ENCODE measurements at regions of chr10 and their contacts with region 1.

Region 1: GRCh38 chr10:101067356-101068083 is 5.7 kb downstream of the KAZALD1 start:
- DNase-seq: peak; percentile 76 to 85
- ATAC-seq: peak; percentile 81
- H3K4me3 ChIP-seq: peak overlapping the region; percentile 12 to 66
- H3K27ac ChIP-seq: peak overlapping the region in 1 of 2 donors; percentile 9
- H3K4me1 ChIP-seq: no peaks in the 10 kb centered on the region
- H3K27me3 ChIP-seq: no peaks in the 10 kb centered on the region

Region 2: DNA sequence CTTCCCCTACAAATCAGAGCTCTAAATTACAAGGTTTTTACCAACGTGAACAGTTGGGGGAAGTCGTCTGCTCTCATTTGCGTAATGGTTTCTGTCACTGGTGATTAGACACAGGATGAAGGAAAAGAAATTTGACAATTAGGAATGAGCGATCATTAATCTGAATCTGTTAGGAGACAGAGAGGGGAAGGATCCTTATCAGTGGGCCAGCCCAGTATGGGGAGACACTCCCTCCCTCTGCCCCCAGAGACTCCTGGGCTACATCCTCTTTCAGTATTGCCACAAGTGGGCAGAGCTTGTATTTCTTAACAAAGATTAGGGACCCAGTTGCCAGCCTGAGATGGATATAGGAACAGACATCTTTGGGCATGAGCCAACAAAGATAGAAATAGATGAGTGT is 516.3 kb before region 1 on chr10:
- intact Hi-C with region 1: no loop called
- DNase-seq: no peak
- ATAC-seq: no peak
- H3K4me3 ChIP-seq: no peak overlapping the region
- H3K27ac ChIP-seq: no peak overlapping the region
- H3K4me1 ChIP-seq: no peaks in the 10 kb centered on the region
- H3K27me3 ChIP-seq: no peaks in the 10 kb centered on the region

Region 3: GRCh38 chr10:100998991-100999741 is 68.4 kb before region 1 on chr10:
- intact Hi-C with region 1: loop called in 1 of 2 experiments (anchors 5 kb)
- DNase-seq: peak; percentile 91 to 95
- ATAC-seq: peak; percentile 90
- H3K4me3 ChIP-seq: peak overlapping the region; percentile 69
- H3K27ac ChIP-seq: peak overlapping the region; percentile 85 to 99
- H3K4me1 ChIP-seq: no peaks in the 10 kb centered on the region
- H3K27me3 ChIP-seq: no peaks in the 10 kb centered on the region

Region 4: GRCh38 chr10:101041252-101041761 is 26.2 kb before region 1 on chr10:
- intact Hi-C with region 1: loop called in 1 of 2 experiments (anchors 2 kb)
- DNase-seq: peak; percentile 85
- ATAC-seq: peak; percentile 88
- H3K4me3 ChIP-seq: no peak overlapping the region
- H3K27ac ChIP-seq: no peak overlapping the region
- H3K4me1 ChIP-seq: no peaks in the 10 kb centered on the region
- H3K27me3 ChIP-seq: no peaks in the 10 kb centered on the region